ENCODE measurements at regions of chr17 and their contacts with region 1.

Region 1: DNA sequence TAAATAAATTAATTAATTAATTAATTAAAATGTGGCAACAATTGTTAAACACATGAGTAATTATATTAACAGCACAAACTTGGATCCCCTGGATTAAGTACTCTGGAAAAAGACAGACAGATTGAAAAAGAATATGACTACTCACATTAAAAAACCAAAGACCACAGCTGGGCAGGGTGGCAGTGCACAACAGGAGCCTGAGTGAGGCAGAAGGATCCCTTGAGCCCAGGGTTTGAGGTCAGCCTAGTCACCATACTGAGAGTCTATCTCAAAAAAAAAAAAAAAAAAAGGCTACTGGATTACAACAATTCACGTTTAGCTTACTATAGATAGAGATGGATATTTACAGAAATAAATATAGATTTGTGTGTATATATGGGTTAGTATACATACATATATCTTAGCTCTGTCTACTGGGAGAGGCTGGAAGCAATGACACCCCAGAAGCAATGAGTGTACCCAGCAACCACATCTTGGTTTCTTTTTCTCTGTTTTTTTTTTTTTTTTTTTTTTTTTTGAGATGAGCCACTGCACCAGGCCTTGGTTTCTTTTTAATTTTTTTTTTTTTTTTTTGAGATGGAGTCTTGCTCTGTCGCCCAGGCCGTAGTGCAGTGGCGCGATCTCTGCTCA is 10.6 kb upstream of the SUZ12 start:
- DNase-seq: no peak
- H3K4me3 ChIP-seq: no peak overlapping the region
- H3K27ac ChIP-seq: no peak overlapping the region
- H3K4me1 ChIP-seq: no peaks in the 10 kb centered on the region
- H3K27me3 ChIP-seq: no peaks in the 10 kb centered on the region
- CTCF ChIP-seq: no peak
- EP300 ChIP-seq: no peak
- RAD21 ChIP-seq: no peak

Region 2: GRCh38 chr17:31907342-31907962 is 18.8 kb before region 1 on chr17:
- CTCF ChIA-PET with region 1: interaction called, 10 read pairs
- POLR2A ChIA-PET with region 1: no interaction called
- DNase-seq: no peak
- H3K4me3 ChIP-seq: 0 out of 4 replicates have a peak overlapping the region, but pooled peaks of 1 of the 2 experiments have one; percentile 1
- H3K27ac ChIP-seq: peak overlapping the region in 1 of 2 experiments; percentile 29; a peak in 1 of 4 replicates
- H3K4me1 ChIP-seq: peaks cover 6 to 7% of the 10 kb centered on the region in 2 experiments; a peak in 2 of 4 replicates
- H3K27me3 ChIP-seq: no peaks in the 10 kb centered on the region
- CTCF ChIP-seq: no peak
- EP300 ChIP-seq: no peak
- RAD21 ChIP-seq: no peak